Caco-2 (cell line): ENCODE measurements at regions of chr5 and their contacts with region 1.

Region 1: GRCh38 chr5:58259685-58260152 is 200.2 kb downstream of the PLK2 start:
- DNase-seq: peak; percentile 11 to 46
- H3K4me3 ChIP-seq: no peak overlapping the region
- H3K4me3 Mint-ChIP-seq: peak overlapping the region; percentile 28
- H3K27ac Mint-ChIP-seq: peak overlapping the region; percentile 75
- H3K4me1 ChIP-seq: peaks cover 15% of the 10 kb centered on the region
- H3K4me1 Mint-ChIP-seq: peaks cover 12% of the 10 kb centered on the region
- H3K27me3 ChIP-seq: no peaks in the 10 kb centered on the region
- H3K27me3 Mint-ChIP-seq: no peaks in the 10 kb centered on the region
- CTCF ChIP-seq: no peak

Region 2: DNA sequence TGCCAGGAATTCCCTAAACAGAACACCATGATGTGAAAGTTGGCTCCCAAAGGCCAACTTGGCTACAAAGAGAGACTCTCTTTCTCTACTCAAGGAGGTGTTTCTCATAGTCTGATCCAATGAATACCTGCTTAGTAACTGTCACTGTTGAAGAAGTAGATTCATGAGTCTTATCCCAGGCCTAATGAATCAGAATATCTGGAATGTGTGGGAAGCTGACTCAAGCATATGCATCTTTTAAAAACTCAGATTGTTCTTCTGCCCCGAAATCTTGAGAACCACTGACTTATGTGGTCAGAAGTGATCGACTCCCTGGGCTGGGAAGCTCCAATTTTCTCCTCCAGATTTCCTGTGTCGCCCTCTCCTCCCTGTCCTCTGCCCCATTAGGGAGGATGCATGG is 145.4 kb before region 1 on chr5:
- CTCF ChIA-PET with region 1: no interaction called
- POLR2A ChIA-PET with region 1: no interaction called
- intact Hi-C with region 1: loop called (anchors 1 kb)
- DNase-seq: no peak
- H3K4me3 ChIP-seq: no peak overlapping the region
- H3K4me3 Mint-ChIP-seq: no peak overlapping the region
- H3K27ac Mint-ChIP-seq: no peak overlapping the region
- H3K4me1 ChIP-seq: peaks cover 11% of the 10 kb centered on the region
- H3K4me1 Mint-ChIP-seq: peaks cover 13% of the 10 kb centered on the region
- H3K27me3 ChIP-seq: no peaks in the 10 kb centered on the region
- H3K27me3 Mint-ChIP-seq: no peaks in the 10 kb centered on the region
- CTCF ChIP-seq: no peak

Region 3: GRCh38 chr5:58286741-58287140 is 27.0 kb after region 1 on chr5:
- CTCF ChIA-PET with region 1: no interaction called
- POLR2A ChIA-PET with region 1: no interaction called
- intact Hi-C with region 1: no loop called
- DNase-seq: no peak
- H3K4me3 ChIP-seq: no peak overlapping the region
- H3K4me3 Mint-ChIP-seq: no peak overlapping the region
- H3K27ac Mint-ChIP-seq: no peak overlapping the region
- H3K4me1 ChIP-seq: no peaks in the 10 kb centered on the region
- H3K4me1 Mint-ChIP-seq: no peaks in the 10 kb centered on the region
- H3K27me3 ChIP-seq: no peaks in the 10 kb centered on the region
- H3K27me3 Mint-ChIP-seq: no peaks in the 10 kb centered on the region
- CTCF ChIP-seq: no peak

Region 4: DNA sequence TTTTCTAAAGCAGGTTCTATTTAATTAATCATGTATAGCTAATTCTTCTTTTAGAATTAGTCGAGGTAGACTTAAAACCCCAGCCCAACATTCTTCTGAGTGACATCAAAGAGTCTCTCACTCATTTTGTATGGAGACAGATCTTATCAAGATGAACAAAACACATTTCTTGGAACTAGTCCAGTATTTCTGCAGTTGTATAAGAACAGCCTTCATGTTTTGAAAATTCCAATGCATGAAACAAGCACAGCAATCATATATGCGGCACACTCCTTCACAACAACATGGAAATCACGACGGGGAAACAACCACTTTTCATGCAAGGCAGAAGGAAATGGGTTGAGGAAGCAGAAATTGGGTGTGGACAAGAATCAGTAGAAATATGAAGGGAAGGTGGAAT is 86.3 kb after region 1 on chr5:
- CTCF ChIA-PET with region 1: no interaction called
- POLR2A ChIA-PET with region 1: no interaction called
- intact Hi-C with region 1: no loop called
- DNase-seq: no peak
- H3K4me3 ChIP-seq: no peak overlapping the region
- H3K4me3 Mint-ChIP-seq: no peak overlapping the region
- H3K27ac Mint-ChIP-seq: no peak overlapping the region
- H3K4me1 ChIP-seq: no peaks in the 10 kb centered on the region
- H3K4me1 Mint-ChIP-seq: no peaks in the 10 kb centered on the region
- H3K27me3 ChIP-seq: no peaks in the 10 kb centered on the region; the same call in 1 of the 2 replicates
- H3K27me3 Mint-ChIP-seq: no peaks in the 10 kb centered on the region
- CTCF ChIP-seq: no peak